WTC11 (cell line): ENCODE measurements at regions of chr7 and their contacts with region 1.

Region 1: GRCh38 chr7:153193144-153193595 is 433.6 kb downstream of the ACTR3B start:
- DNase-seq: peak; percentile 73
- ATAC-seq: peak; percentile 95
- H3K4me3 Mint-ChIP-seq: no peak overlapping the region
- H3K27ac Mint-ChIP-seq: no peak overlapping the region
- H3K4me1 Mint-ChIP-seq: no peaks in the 10 kb centered on the region; the same call in 1 of the 2 replicates
- H3K27me3 Mint-ChIP-seq: peaks cover 4% of the 10 kb centered on the region
- CTCF ChIP-seq: peak; percentile 61

Region 2: DNA sequence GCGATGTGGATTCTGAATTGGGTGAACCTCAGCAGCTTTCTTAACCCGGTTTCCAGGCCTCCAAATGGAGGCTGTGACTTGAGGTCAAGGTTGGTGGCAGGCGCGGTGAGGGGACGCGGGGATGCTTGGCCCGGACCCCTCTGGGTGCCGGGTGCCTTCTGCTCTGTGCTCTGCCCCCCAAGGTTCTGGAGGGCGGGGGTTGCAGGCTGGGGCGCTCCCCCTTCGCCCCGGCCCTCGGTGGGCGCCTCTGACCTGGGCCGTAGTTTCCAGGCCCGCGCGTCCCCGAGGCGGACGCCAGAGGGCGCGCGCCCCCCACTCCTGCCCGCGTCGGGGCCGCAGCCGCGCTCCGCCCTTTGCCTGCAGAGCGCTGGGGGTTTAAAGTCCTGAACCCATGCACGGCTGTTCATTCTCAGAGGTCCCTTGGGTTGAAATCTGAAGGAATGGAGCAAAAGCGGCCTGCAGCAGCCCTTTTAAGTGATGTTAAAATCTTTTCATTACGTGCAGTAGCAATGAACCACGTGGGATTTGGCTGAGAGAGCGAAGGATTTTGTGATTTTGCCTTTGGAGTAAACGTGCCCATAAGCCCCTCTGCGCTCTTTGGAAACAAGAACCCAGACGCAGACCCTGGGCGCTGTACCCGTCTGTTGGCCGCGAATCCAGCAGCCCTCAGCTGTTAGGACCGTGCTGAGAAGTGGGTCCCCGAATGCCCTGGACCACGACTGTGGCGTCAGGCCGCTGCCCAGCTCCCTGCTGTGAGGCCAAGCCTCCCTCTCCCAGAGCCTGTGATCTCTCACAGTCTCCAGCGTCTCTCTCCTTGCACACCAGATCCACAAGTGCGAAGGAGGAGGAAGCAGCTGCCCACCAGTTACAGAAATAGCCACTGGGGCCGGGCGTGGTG is 298.6 kb before region 1 on chr7:
- CTCF ChIA-PET with region 1: interaction called, 13 read pairs
- POLR2A ChIA-PET with region 1: no interaction called
- DNase-seq: peak; percentile 60
- ATAC-seq: peak; percentile 93
- H3K4me3 Mint-ChIP-seq: no peak overlapping the region
- H3K27ac Mint-ChIP-seq: no peak overlapping the region
- H3K4me1 Mint-ChIP-seq: peaks cover under 1% of the 10 kb centered on the region; the same call in 1 of the 2 replicates
- H3K27me3 Mint-ChIP-seq: no peaks in the 10 kb centered on the region
- CTCF ChIP-seq: peak; percentile 86

Region 3: DNA sequence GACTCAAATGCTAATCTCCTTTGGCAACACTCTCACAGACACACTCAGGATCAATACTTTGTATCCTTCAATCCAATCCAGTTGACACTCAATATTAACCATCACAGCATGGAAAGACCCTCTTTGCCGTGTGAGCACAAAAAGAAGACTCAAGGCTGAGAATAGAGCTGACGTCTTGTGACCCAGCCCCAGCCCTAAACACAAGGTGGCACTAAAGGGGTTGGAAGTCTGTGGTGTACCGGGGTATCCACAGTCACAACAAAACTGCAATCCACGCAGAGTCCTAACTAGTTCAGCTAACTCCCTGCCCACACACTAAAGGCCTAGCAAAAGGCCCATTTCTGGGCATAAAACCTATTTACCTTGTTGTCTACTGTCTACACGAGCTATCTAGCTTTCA is 233.6 kb before region 1 on chr7:
- CTCF ChIA-PET with region 1: interaction called, 13 read pairs
- POLR2A ChIA-PET with region 1: interaction called, 3 read pairs
- DNase-seq: peak; percentile 47
- ATAC-seq: peak; percentile 91
- H3K4me3 Mint-ChIP-seq: no peak overlapping the region
- H3K27ac Mint-ChIP-seq: no peak overlapping the region
- H3K4me1 Mint-ChIP-seq: peaks cover 23% of the 10 kb centered on the region
- H3K27me3 Mint-ChIP-seq: no peaks in the 10 kb centered on the region
- CTCF ChIP-seq: no peak

Region 4: DNA sequence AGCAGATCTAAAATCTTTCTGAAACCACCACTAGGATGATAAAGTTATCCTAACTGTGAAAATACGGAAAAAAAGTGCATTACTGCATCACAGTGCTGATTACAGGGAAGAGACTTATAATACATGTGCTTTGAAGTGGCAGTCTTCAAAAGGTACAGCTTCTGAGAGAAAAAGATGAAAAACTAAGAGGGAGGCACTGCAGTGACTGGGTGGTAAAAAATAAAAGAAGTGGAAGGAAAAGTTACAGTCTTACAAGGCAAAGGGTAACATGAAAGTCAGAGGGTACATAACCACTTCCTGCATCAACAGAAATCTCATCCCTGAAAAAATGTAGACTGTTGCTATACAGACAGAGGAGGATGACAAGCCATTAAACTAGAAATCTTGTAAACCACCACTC is 31.7 kb after region 1 on chr7:
- CTCF ChIA-PET with region 1: no interaction called
- POLR2A ChIA-PET with region 1: no interaction called
- DNase-seq: no peak
- ATAC-seq: no peak
- H3K4me3 Mint-ChIP-seq: no peak overlapping the region
- H3K27ac Mint-ChIP-seq: no peak overlapping the region
- H3K4me1 Mint-ChIP-seq: no peaks in the 10 kb centered on the region
- H3K27me3 Mint-ChIP-seq: peaks cover 15% of the 10 kb centered on the region
- CTCF ChIP-seq: no peak